CD4-positive, alpha-beta T cell (primary cell): ENCODE measurements at regions of chr22 and their contacts with region 1.

Region 1: GRCh38 chr22:28570691-28571373 is 108.8 kb downstream of the TTC28 start:
- DNase-seq: no peak
- ATAC-seq: no peak
- H3K4me3 ChIP-seq: no peak overlapping the region
- H3K4me3 Mint-ChIP-seq: no peak overlapping the region
- H3K27ac ChIP-seq: no peak overlapping the region
- H3K27ac Mint-ChIP-seq: no peak overlapping the region
- H3K4me1 ChIP-seq: no peaks in the 10 kb centered on the region
- H3K4me1 Mint-ChIP-seq: no peaks in the 10 kb centered on the region
- H3K27me3 ChIP-seq: peaks cover 0 to 3% of the 10 kb centered on the region in 2 experiments
- H3K27me3 Mint-ChIP-seq: peaks cover 17% of the 10 kb centered on the region
- CTCF ChIP-seq: no peak

Region 2: DNA sequence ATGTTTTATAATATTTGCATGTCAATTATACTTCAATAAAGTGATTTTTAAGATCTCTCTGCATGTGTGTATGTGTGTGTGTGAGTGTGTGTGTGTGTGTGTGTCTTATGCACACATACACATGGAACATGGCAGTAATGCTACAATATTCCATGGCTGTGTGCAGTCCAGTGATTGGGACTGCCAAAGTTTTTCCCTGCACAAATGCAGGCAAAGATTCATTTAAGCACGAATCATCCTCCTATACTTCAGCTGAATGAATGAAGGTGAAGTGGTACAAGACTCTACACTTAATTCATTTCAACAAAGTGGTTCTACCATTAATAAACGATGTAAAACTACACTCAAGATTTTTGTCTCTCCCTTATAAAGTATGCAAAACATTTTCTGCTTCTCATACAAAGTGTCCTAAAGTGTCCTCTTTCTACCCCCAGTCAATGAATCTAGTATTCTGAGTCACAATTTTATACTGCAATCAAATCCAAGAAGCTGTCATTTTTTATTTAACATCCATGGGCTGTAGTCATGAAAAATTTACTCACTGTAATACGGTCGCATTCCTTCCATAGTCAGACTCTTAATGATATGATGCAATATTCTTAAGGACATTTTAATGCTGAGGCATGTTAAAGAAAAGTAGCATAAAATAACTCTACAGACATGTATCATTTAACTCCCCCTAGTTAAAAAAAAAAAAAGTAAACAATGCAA is 23.5 kb before region 1 on chr22:
- CTCF ChIA-PET with region 1: no interaction called
- POLR2A ChIA-PET with region 1: no interaction called
- intact Hi-C with region 1: loop called in 1 of 2 experiments (anchors 1 kb)
- DNase-seq: no peak
- ATAC-seq: no peak
- H3K4me3 ChIP-seq: no peak overlapping the region
- H3K4me3 Mint-ChIP-seq: no peak overlapping the region
- H3K27ac ChIP-seq: no peak overlapping the region
- H3K27ac Mint-ChIP-seq: no peak overlapping the region
- H3K4me1 ChIP-seq: no peaks in the 10 kb centered on the region
- H3K4me1 Mint-ChIP-seq: no peaks in the 10 kb centered on the region
- H3K27me3 ChIP-seq: peaks cover 0 to 6% of the 10 kb centered on the region in 2 experiments
- H3K27me3 Mint-ChIP-seq: peaks cover 7% of the 10 kb centered on the region
- CTCF ChIP-seq: no peak